Activated B cell treated with CpG ODN at 0.5 μM for 24 hours (primary cell): ENCODE measurements at regions of chr3 and their contacts with region 1.

Region 1: DNA sequence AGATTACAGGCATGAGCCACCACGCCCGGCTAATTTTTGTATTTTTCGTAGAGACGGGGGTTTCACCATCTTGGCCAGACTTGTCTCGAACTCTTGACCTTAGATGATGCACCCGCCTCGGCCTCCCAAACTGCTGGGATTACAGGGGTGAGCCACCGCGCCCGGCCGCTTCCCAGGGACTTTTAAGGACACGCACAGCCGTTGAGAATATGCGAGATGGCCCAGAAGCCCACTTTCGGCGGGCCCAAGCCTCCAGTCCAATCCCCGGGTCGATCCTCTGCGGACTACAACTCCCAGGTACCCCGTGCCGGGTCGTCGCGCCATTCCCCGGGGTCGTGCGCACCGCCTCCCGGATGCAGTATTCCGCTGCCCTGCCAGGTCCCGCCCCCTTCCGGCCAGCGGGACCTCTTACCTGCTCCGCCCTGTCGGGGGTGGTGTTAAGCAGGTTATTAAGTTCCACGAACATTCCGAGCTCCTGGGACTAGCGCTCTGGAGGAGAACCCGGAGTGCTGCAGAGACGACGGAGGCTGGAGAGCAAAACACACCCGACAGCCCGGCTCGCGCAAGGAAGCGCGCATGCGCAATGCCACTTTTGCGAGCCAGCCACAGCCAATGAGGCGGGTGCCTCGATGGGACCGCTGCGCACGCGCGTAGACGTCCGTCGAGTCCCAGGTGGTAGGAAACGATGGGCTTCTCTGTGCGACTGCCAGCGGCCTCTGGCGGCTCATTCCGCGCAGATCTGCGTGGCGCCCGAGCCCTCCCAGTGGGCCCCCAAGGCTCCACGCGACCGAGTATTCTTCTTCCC is at the start of gene ELP6:
- DNase-seq: peak; percentile 95
- ATAC-seq: peak; percentile 93
- H3K4me3 Mint-ChIP-seq: peak within 1 kb of the TSS; percentile 98
- H3K27ac Mint-ChIP-seq: peak within 1 kb of the TSS; percentile 99
- H3K4me1 Mint-ChIP-seq: peaks cover 18% of the 10 kb centered on the region
- H3K27me3 Mint-ChIP-seq: no peaks in the 10 kb centered on the region
- CTCF ChIP-seq: no peak
- total RNA-seq, gene ELP6: 37.8 and 45.4 TPM in 2 replicates

Region 2: GRCh38 chr3:47365213-47366153 is 147.8 kb before region 1 on chr3:
- CTCF ChIA-PET with region 1: no interaction called
- POLR2A ChIA-PET with region 1: interaction called, 15 read pairs
- intact Hi-C with region 1: no loop called
- DNase-seq: no peak
- ATAC-seq: no peak
- H3K4me3 Mint-ChIP-seq: no peak overlapping the region
- H3K27ac Mint-ChIP-seq: no peak overlapping the region
- H3K4me1 Mint-ChIP-seq: peaks cover 12% of the 10 kb centered on the region
- H3K27me3 Mint-ChIP-seq: no peaks in the 10 kb centered on the region
- CTCF ChIP-seq: no peak

Region 3: GRCh38 chr3:47380601-47381316 is 132.6 kb before region 1 on chr3 and contains the start of gene PTPN23:
- CTCF ChIA-PET with region 1: no interaction called
- POLR2A ChIA-PET with region 1: interaction called, 6 read pairs
- intact Hi-C with region 1: loop called (anchors 1 kb)
- DNase-seq: peak; percentile 98
- ATAC-seq: peak; percentile 80
- H3K4me3 Mint-ChIP-seq: peak within 1 kb of the TSS; percentile 95
- H3K27ac Mint-ChIP-seq: peak within 1 kb of the TSS; percentile 96
- H3K4me1 Mint-ChIP-seq: peaks cover 49% of the 10 kb centered on the region
- H3K27me3 Mint-ChIP-seq: no peaks in the 10 kb centered on the region
- CTCF ChIP-seq: no peak
- total RNA-seq, gene PTPN23: 44.0 and 50.3 TPM in 2 replicates

Region 4: DNA sequence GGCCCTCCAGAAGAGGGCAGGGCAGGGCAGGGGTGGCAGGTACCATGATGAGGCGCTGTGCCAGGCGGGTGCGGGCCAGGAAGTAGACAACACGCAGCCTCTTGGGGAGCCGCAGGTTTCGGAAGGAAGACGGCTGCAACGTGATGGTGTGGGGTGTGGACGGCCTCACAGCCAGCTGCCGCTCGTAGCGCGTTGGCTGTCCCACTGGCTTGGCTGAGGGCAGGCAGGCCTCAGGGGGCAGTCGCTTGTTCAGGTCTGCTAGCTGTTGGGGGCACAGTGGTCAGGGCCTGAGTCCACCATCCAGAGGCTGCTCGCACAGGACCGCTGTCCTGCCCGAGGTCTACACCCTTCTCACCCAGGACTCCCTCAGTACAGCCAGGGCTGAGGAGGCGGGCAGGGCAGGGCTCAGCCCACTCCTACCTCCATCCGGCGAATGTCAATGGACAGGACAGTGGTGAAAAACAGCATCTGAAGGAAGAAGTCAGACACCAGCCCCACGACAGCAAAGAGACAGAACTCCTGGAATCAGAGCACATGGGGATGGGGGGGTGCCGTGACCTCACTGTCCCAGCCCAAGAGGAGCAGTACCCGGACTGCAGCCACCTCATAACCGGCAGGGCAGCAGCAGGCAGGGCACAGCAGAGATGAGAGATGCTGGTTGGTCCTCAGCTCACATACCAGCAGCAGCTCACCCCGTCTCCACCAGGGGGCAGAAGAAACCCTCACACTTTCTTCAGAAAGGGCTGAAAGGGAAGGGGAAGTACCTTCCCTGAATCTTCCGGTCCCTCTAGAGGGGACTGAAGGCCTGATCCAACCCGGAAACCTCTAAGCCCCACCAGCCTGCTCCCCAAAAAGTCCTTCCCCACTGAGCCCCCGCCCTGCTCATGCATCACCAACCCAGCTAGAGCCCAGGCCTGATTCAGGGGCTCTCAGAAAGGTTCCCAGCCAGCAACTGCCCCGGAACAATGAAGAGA is 92.5 kb before region 1 on chr3:
- CTCF ChIA-PET with region 1: interaction called, 8 read pairs
- POLR2A ChIA-PET with region 1: interaction called, 5 read pairs
- intact Hi-C with region 1: loop called (anchors 1 kb)
- DNase-seq: peak; percentile 75
- ATAC-seq: peak; percentile 98
- H3K4me3 Mint-ChIP-seq: peak overlapping the region; percentile 75
- H3K27ac Mint-ChIP-seq: peak overlapping the region; percentile 98
- H3K4me1 Mint-ChIP-seq: peaks cover 16% of the 10 kb centered on the region
- H3K27me3 Mint-ChIP-seq: no peaks in the 10 kb centered on the region
- CTCF ChIP-seq: no peak

Region 5: GRCh38 chr3:47475570-47476329 is 37.6 kb before region 1 on chr3 and contains the start of gene SCAP:
- CTCF ChIA-PET with region 1: interaction called, 4 read pairs
- POLR2A ChIA-PET with region 1: interaction called, 5 read pairs
- intact Hi-C with region 1: loop called (anchors 1 kb)
- DNase-seq: peak; percentile 95
- ATAC-seq: peak; percentile 95
- H3K4me3 Mint-ChIP-seq: peak within 1 kb of the TSS; percentile 91
- H3K27ac Mint-ChIP-seq: peak within 1 kb of the TSS; percentile 89
- H3K4me1 Mint-ChIP-seq: peaks cover 36% of the 10 kb centered on the region
- H3K27me3 Mint-ChIP-seq: no peaks in the 10 kb centered on the region
- CTCF ChIP-seq: peak; percentile 98
- total RNA-seq, gene SCAP: 82.5 and 84.3 TPM in 2 replicates

Region 6: DNA sequence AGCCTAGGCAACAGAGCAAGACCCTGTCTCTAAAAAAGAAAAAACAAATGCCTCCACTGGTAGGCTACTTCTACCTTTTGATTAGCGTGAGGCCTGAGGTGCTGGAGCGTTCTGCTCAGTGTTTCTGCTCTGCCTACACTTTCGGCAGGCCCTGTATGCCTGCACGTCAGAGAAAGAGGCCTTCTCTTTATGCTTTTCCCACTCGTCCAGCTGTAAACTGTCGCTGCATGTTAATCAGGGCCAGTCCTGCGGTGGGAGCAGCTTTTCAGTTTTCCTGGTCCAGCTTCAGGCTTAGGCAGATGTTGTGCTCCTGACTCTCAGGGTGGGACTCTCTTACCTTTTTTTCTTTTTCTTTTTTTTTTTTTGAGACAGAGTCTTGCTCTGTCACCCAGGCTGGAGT is 40.1 kb after region 1 on chr3:
- CTCF ChIA-PET with region 1: no interaction called
- POLR2A ChIA-PET with region 1: no interaction called
- intact Hi-C with region 1: no loop called
- DNase-seq: no peak
- ATAC-seq: no peak
- H3K4me3 Mint-ChIP-seq: no peak overlapping the region
- H3K27ac Mint-ChIP-seq: no peak overlapping the region
- H3K4me1 Mint-ChIP-seq: no peaks in the 10 kb centered on the region
- H3K27me3 Mint-ChIP-seq: peaks cover 8% of the 10 kb centered on the region
- CTCF ChIP-seq: no peak

Region 7: DNA sequence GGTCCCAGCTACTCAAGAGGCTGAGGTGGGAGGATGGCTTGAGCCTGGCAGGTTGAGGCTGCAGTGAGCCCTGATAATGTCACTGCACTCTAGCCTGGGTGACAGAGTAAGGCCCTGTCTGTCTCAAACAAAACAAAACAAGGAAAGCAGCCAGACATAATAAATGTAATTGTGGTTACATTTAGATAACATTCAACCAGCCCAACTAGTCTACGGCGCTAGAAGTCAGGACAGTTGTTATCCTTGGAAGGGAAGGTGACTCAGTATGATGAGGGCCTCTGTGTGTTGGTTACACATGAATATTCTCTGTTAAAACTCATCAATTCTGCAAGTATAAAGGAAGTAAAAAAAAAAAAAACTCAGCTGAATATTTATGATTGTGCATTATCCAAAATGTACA is 92.3 kb after region 1 on chr3:
- CTCF ChIA-PET with region 1: no interaction called
- POLR2A ChIA-PET with region 1: no interaction called
- intact Hi-C with region 1: no loop called
- DNase-seq: no peak
- ATAC-seq: no peak
- H3K4me3 Mint-ChIP-seq: no peak overlapping the region
- H3K27ac Mint-ChIP-seq: no peak overlapping the region
- H3K4me1 Mint-ChIP-seq: no peaks in the 10 kb centered on the region
- H3K27me3 Mint-ChIP-seq: no peaks in the 10 kb centered on the region
- CTCF ChIP-seq: no peak

Region 8: DNA sequence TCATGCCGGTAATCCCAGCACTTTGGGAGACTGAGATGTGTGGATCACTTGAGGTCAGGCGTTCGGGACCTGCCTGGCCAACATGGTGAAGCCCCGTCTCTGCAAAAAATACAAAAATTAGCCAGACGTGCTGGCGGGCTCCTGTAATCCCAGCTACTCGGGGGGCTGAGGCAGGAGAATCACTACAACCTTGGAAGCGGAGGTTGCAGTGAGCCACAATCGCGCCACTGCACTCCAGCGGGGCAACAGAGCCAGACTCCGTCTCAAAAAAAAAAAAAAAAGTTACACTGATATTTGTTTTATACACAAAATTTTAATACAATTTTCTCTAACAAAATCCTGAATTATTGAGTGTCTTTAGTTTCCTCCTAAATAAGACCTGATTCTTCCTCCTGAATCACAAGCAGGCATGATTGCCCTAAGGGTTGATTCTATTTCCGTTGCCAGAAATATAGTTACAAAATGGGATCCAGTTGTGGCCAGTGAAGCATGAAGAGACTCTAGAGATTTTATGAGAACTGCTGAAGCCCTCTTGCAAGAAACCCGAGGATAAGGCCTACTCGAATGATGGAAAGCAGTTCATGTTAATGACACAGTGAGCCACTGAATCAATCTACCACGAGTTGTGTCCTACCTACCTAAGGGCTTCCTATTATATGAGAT is 278.0 kb after region 1 on chr3:
- CTCF ChIA-PET with region 1: no interaction called
- POLR2A ChIA-PET with region 1: no interaction called
- intact Hi-C with region 1: loop called (anchors 2 kb)
- DNase-seq: no peak
- ATAC-seq: no peak
- H3K4me3 Mint-ChIP-seq: no peak overlapping the region
- H3K27ac Mint-ChIP-seq: no peak overlapping the region
- H3K4me1 Mint-ChIP-seq: peaks cover 4% of the 10 kb centered on the region
- H3K27me3 Mint-ChIP-seq: no peaks in the 10 kb centered on the region
- CTCF ChIP-seq: no peak

Region 9: DNA sequence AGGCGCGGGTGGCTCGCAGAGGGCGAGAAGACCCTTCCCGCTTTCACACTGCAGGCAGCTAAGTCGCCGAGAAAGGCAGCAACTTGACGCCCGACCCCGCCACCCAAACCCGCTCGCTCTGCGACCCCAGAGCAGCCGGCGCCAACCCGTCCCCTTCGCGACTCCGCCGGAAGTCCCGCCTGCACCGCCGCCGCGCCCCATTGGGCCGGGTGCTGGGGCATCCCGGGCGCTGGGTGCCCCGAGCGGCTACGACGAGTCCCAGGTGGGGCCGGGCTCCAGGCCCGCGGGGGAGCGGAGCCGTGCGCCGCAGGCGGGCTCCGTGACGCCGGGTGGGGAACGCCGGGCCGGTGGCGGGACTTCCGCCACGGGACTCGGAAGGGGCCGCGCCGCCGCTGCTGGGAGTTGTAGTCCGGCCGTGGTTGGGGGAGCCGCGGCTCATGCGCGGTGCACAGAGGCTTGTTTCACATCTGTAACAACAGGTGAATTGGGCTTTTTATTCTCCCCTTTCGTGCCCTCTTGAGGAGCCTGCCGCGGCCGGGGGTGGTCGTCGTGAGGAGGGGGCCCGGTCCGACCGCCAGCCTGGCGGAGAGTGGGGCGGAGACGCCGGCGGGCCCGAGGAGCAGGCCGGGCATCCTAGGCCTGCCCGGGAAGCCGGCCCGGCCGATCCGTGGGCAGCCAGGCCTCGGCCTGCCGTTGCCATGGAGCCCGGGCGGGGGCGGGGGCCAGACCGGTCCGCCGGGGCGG is 289.6 kb after region 1 on chr3 and contains the start of gene DHX30:
- CTCF ChIA-PET with region 1: no interaction called
- POLR2A ChIA-PET with region 1: no interaction called
- intact Hi-C with region 1: loop called (anchors 1 kb)
- DNase-seq: peak; percentile 87
- ATAC-seq: peak; percentile 93
- H3K4me3 Mint-ChIP-seq: peak within 1 kb of the TSS; percentile 93
- H3K27ac Mint-ChIP-seq: peak within 1 kb of the TSS; percentile 92
- H3K4me1 Mint-ChIP-seq: peaks cover 20% of the 10 kb centered on the region
- H3K27me3 Mint-ChIP-seq: no peaks in the 10 kb centered on the region
- CTCF ChIP-seq: no peak
- total RNA-seq, gene DHX30: 71.3 and 77.4 TPM in 2 replicates